K562 (cell line): ENCODE measurements at regions of chr5 and their contacts with region 1.

Region 1: DNA sequence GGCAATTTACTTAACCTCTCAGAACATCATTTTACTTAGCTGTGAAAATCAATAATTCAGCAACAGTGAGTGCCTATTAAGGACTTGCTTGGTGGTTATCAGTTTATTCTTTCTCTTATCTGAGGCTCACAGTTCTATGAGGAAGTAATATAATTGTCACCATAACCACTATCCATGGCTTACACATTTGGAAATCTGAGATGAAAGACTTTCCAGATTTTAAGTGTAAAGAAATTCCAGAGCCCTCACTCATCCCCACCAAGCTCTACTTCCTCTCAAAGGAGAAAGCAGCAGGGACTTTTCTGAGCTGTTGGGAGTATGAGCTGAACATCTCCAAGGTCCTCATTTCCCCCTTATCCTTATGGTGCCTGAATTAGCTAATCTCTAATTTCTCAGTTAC is 321.5 kb downstream of the FBXL7 start:
- DNase-seq: no peak
- ATAC-seq: no peak
- H3K4me3 ChIP-seq: no peak overlapping the region
- H3K27ac ChIP-seq: no peak overlapping the region
- H3K4me1 ChIP-seq: no peaks in the 10 kb centered on the region
- H3K27me3 ChIP-seq: no peaks in the 10 kb centered on the region
- CTCF ChIP-seq: no peak
- EP300 ChIP-seq: no peak
- POLR2A ChIP-seq: no peak
- RAD21 ChIP-seq: no peak

Region 2: DNA sequence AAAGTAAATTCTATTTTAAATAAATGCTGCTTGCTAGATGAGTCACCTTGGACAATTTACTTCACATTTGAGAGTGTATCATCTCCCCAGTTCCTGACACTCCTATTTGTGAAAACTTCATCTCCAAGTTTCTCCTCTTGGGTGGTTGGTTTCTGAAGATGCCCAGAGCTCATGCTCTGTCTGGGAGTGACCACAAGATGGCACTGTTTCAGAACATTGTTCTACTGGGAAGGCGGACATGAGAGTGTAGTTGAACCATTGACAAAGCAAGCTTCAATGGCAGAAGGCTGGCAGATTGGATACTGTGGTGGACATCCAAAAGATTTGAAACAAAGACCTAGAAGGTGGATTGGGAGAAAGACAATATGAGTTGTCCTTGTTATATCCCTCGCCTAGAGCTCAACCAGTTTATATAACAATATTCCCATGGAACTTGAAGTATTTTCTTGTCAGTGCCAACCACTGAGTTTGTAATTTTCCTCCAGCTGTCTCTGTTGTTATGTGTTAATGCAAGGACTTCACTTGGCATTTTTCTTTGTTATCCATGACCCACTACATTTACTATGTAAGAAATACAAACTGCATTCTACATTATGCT is 715.6 kb before region 1 on chr5:
- CTCF ChIA-PET with region 1: no interaction called
- POLR2A ChIA-PET with region 1: no interaction called
- in situ Hi-C with region 1: no loop called
- intact Hi-C with region 1: loop called (anchors 5 kb)
- DNase-seq: peak; percentile 54 to 65 (median 57)
- ATAC-seq: peak; percentile 87
- H3K4me3 ChIP-seq: no peak overlapping the region
- H3K27ac ChIP-seq: no peak overlapping the region
- H3K4me1 ChIP-seq: no peaks in the 10 kb centered on the region
- H3K27me3 ChIP-seq: no peaks in the 10 kb centered on the region
- CTCF ChIP-seq: peak; percentile 38 to 69 (median 61); a peak in 4 of 6 replicates
- EP300 ChIP-seq: no peak
- POLR2A ChIP-seq: no peak
- RAD21 ChIP-seq: peak; percentile 38 to 68

Region 3: GRCh38 chr5:15877914-15878313 is 56.4 kb after region 1 on chr5:
- CTCF ChIA-PET with region 1: no interaction called
- POLR2A ChIA-PET with region 1: no interaction called
- in situ Hi-C with region 1: no loop called
- intact Hi-C with region 1: no loop called
- DNase-seq: no peak
- ATAC-seq: no peak
- H3K4me3 ChIP-seq: no peak overlapping the region
- H3K27ac ChIP-seq: no peak overlapping the region
- H3K4me1 ChIP-seq: no peaks in the 10 kb centered on the region
- H3K27me3 ChIP-seq: no peaks in the 10 kb centered on the region
- CTCF ChIP-seq: no peak
- EP300 ChIP-seq: no peak
- POLR2A ChIP-seq: no peak
- RAD21 ChIP-seq: no peak

Region 4: DNA sequence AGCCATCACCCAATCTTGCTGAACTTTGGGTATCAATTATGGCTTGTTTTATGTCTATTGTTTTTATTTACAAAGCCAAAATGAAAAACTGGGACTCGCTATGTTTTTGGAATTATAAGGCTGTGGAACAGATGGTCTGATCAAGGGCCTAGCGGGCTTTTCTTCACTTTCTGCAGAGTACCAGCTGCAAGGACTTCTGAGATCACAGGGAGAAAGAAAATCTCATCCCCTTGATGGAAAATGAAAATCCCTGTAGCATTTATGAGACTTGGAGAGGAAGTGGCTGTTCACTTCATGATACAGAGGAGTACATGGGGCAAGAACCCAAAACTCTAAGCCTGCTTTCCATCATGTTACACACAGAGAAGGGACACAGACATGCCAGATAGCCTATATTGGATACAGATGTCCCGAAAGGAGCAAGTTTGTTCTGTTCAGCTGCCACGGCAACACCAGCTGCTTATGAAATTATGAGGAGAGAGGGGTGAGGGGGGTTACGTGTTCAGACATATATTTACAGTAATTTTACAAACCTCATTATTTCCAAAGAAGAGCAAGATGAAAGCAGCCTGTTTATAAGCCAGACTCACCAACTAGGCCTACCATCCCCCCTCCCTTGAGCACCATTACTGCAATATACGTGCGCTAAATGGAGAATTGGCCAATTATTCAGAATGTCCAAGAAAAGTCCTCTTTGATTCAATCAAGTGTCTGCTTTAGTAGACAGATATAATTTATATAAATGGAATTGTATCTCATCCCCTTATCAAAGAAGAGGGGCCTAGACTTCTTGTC is 138.1 kb after region 1 on chr5:
- CTCF ChIA-PET with region 1: no interaction called
- POLR2A ChIA-PET with region 1: no interaction called
- in situ Hi-C with region 1: no loop called
- intact Hi-C with region 1: no loop called
- DNase-seq: no peak
- ATAC-seq: no peak
- H3K4me3 ChIP-seq: no peak overlapping the region
- H3K27ac ChIP-seq: no peak overlapping the region
- H3K4me1 ChIP-seq: no peaks in the 10 kb centered on the region
- H3K27me3 ChIP-seq: no peaks in the 10 kb centered on the region
- CTCF ChIP-seq: no peak
- EP300 ChIP-seq: no peak
- POLR2A ChIP-seq: no peak
- RAD21 ChIP-seq: no peak